Breast epithelium (tissue), 4 donors: ENCODE measurements at regions of chr4 and their contacts with region 1.

Region 1: GRCh38 chr4:12911750-12912358 is 572.3 kb downstream of the RAB28 start:
- DNase-seq: no peak
- H3K4me3 ChIP-seq: no peak overlapping the region
- H3K27ac ChIP-seq: no peak overlapping the region
- H3K4me1 ChIP-seq: no peaks in the 10 kb centered on the region
- H3K27me3 ChIP-seq: no peaks in the 10 kb centered on the region
- CTCF ChIP-seq: no peak
- POLR2A ChIP-seq: no peak

Region 2: GRCh38 chr4:12897954-12898353 is 13.9 kb before region 1 on chr4:
- intact Hi-C with region 1: no loop called
- DNase-seq: no peak
- H3K4me3 ChIP-seq: no peak overlapping the region
- H3K27ac ChIP-seq: no peak overlapping the region
- H3K4me1 ChIP-seq: no peaks in the 10 kb centered on the region
- H3K27me3 ChIP-seq: no peaks in the 10 kb centered on the region
- CTCF ChIP-seq: no peak
- POLR2A ChIP-seq: no peak

Region 3: GRCh38 chr4:13174001-13174400 is 262.1 kb after region 1 on chr4:
- intact Hi-C with region 1: loop called (anchors 5 kb)
- DNase-seq: peak in 1 of 2 donors; percentile 32
- H3K4me3 ChIP-seq: no peak overlapping the region
- H3K27ac ChIP-seq: peak overlapping the region in 1 of 2 donors; percentile 32
- H3K4me1 ChIP-seq: no peaks in the 10 kb centered on the region
- H3K27me3 ChIP-seq: no peaks in the 10 kb centered on the region
- CTCF ChIP-seq: no peak
- POLR2A ChIP-seq: no peak